ENCODE measurements at regions of chr13 and their contacts with region 1.

Region 1: DNA sequence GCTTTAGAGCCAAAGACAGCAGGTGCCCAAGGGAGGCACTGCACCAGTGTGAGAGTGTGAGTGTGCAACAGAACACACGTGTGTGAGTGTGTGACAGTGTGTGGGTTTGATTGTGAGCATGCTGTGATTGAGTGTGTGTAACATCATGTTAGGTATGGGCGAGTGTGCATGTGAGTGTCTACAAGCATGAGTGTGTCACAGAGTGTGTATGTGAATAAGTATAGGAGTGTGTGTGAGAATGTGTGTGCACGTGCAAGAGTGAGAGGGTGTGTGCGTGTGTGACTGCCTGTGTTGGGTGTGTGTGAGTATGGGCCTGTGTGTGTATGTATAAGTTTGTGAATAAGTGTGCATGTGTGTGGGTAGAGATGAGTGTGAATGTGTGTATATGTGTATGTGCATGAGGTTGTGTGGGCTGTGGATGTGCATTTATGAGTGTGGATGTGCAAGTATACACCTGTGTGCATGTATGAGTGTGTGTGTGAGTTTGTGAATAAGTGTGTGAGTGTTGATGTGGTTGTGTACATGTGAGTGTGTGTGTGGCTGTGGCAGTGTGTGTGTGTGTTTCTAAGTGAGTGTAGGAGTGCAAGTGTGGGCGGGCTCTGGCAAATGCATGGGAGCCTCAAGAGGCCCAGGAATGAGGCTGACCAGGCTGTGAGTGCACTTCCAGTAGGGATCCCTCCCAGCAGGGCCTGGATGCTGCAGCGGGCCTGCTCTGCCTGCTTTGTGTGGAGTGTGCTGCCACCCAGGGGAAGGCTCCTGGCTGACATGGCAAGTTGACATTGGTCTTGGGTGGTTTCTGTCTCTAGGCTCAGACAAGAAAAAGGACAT is 198.4 kb downstream of the COL4A1 start:
- DNase-seq: peak; percentile 80 to 81
- ATAC-seq: peak; percentile 85 to 94 (median 90)
- H3K4me3 ChIP-seq: no peak overlapping the region
- H3K27ac ChIP-seq: peak overlapping the region in 8 of 10 donors; percentile 32 to 85 (median 66)
- H3K4me1 ChIP-seq: peaks cover 4 to 50% (median 21%) of the 10 kb centered on the region in 9 donors
- H3K27me3 ChIP-seq: no peaks in the 10 kb centered on the region
- CTCF ChIP-seq: peak; percentile 34 to 83 (median 63)

Region 2: GRCh38 chr13:109145631-109146030 is 962.9 kb before region 1 on chr13:
- intact Hi-C with region 1: loop called in 7 of 10 experiments (anchors 5 to 10 kb)
- DNase-seq: peak in 1 of 2 donors; percentile 42
- ATAC-seq: peak in 7 of 8 donors; percentile 58 to 90 (median 84)
- H3K4me3 ChIP-seq: no peak overlapping the region
- H3K27ac ChIP-seq: no peak overlapping the region
- H3K4me1 ChIP-seq: peaks cover 0 to 4% (median 0%) of the 10 kb centered on the region in 9 donors
- H3K27me3 ChIP-seq: peaks cover 4 to 24% (median 18%) of the 10 kb centered on the region in 7 donors
- CTCF ChIP-seq: peak; percentile 54 to 80 (median 69)

Region 3: GRCh38 chr13:109869312-109870237 is 239.0 kb before region 1 on chr13:
- intact Hi-C with region 1: loop called in 5 of 10 experiments (anchors 5 to 10 kb)
- DNase-seq: peak; percentile 80 to 81
- ATAC-seq: peak; percentile 83 to 94 (median 88)
- H3K4me3 ChIP-seq: peak overlapping the region in 9 of 10 donors; percentile 15 to 52 (median 44)
- H3K27ac ChIP-seq: peak overlapping the region; percentile 42 to 87 (median 64)
- H3K4me1 ChIP-seq: peaks cover 0 to 38% (median 19%) of the 10 kb centered on the region in 9 donors
- H3K27me3 ChIP-seq: no peaks in the 10 kb centered on the region
- CTCF ChIP-seq: peak in 6 of 9 donors; percentile 16 to 50 (median 38)

Region 4: GRCh38 chr13:109883181-109884180 is 225.1 kb before region 1 on chr13:
- intact Hi-C with region 1: loop called in 4 of 10 experiments (anchors 5 to 10 kb)
- DNase-seq: peak in 1 of 2 donors; percentile 21
- ATAC-seq: peak; percentile 72 to 96 (median 94)
- H3K4me3 ChIP-seq: no peak overlapping the region
- H3K27ac ChIP-seq: peak overlapping the region in 3 of 10 donors; percentile 25 to 77 (median 30)
- H3K4me1 ChIP-seq: peaks cover 0 to 15% (median 3%) of the 10 kb centered on the region in 9 donors
- H3K27me3 ChIP-seq: no peaks in the 10 kb centered on the region
- CTCF ChIP-seq: no peak

Region 5: GRCh38 chr13:109922518-109922917 is 186.0 kb before region 1 on chr13:
- intact Hi-C with region 1: no loop called
- DNase-seq: no peak
- ATAC-seq: no peak
- H3K4me3 ChIP-seq: no peak overlapping the region
- H3K27ac ChIP-seq: no peak overlapping the region
- H3K4me1 ChIP-seq: no peaks in the 10 kb centered on the region
- H3K27me3 ChIP-seq: no peaks in the 10 kb centered on the region
- CTCF ChIP-seq: no peak

Region 6: GRCh38 chr13:110197046-110197445 is 88.5 kb after region 1 on chr13:
- intact Hi-C with region 1: no loop called
- DNase-seq: no peak
- ATAC-seq: no peak
- H3K4me3 ChIP-seq: no peak overlapping the region
- H3K27ac ChIP-seq: no peak overlapping the region
- H3K4me1 ChIP-seq: no peaks in the 10 kb centered on the region
- H3K27me3 ChIP-seq: no peaks in the 10 kb centered on the region
- CTCF ChIP-seq: no peak

Region 7: DNA sequence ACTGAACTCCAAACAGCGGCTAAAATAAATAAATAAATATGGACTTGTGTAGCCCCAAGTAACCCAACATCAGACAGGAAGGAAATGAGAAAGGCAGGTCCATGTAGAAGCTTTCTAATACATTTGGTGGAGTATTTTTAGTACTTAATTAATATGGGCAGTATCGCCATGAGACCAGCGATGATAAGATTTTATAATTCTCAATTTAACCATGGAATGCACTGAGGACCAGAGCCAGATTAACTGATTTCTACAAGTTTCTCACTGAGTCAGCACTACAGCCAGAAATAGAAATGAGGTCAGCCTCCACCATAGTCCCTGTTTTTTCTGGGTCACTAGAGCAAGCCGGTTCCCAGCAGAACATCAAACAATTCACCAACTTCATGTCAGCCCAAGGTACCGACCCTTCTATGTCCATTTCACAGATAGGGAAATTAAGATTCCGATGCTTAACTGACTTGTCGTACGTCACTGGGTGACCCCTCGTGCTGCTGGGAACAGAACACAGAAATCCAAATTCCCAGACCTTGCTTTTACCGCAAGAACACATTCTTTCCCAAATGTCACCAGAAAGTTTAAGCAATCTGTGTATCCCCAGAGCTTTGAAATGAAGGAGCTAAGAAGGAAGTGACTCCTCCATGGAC is 108.0 kb after region 1 on chr13:
- intact Hi-C with region 1: no loop called
- DNase-seq: peak in 1 of 2 donors; percentile 52
- ATAC-seq: peak; percentile 54 to 78 (median 65)
- H3K4me3 ChIP-seq: peak overlapping the region in 1 of 10 donors; percentile 3
- H3K27ac ChIP-seq: peak overlapping the region; percentile 8 to 81 (median 52)
- H3K4me1 ChIP-seq: peaks cover 8 to 79% (median 61%) of the 10 kb centered on the region in 9 donors
- H3K27me3 ChIP-seq: no peaks in the 10 kb centered on the region
- CTCF ChIP-seq: no peak

Measured in heart right ventricle (tissue), 16 donors.